Mammary epithelial cell (primary cell): ENCODE measurements at regions of chr11 and their contacts with region 1.

Region 1: DNA sequence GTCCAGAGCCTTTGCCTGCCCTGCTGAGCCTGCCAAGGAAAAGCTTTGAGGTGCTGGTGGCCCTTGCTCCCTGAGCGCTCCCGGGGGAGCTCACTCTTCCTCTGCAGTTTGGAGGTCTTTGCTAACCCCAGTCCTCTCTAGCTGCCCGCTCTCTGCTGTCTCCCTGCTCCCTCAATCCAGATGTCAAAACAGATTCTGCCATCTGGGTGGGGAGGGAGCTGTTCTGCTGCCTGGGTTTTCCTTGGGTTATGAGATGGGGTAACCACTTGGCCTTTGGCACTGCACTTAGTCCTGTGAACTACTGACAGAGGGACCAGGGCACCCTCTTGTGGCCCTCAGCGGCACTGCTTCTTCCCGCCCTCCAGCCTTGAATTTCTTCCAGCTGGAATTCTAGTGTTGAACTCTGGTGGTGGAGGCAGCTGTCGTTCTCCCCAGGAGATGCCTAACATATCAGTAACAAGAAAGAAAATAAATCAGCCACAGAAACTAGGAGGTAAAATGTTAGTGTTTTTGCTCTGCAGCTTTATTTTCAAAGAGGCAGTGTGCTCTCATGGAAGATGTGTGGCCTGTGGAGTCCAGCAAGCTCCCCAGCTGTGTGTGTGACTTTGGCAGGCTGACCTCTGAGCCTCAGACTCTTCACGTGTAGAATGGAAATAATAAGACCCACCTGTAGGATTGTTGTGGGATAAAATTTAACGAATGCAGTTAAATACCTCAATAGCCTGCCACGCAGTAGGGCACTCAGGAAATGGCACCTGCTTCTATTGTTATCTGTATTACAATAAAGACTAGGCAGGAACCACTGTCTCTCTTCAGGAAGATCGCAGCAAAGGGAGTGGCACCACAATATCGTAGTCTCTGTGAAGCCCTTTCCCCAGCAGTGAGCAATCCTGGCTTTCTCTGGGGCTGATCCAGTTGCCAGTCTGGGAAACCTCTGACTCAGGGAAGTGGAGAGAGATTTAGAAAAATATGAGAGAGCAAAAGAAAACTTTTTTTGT is 23.4 kb downstream of the ARFGAP2 start:
- DNase-seq: peak; percentile 55
- H3K4me3 ChIP-seq: no peak overlapping the region
- H3K27ac ChIP-seq: no peak overlapping the region
- H3K4me1 ChIP-seq: no peaks in the 10 kb centered on the region
- H3K27me3 ChIP-seq: no peaks in the 10 kb centered on the region
- CTCF ChIP-seq: peak; percentile 99 to 100

Region 2: GRCh38 chr11:46461461-46461927 is 691.8 kb before region 1 on chr11:
- CTCF ChIA-PET with region 1: no interaction called
- dilution Hi-C with region 1: no loop called
- in situ Hi-C with region 1: no loop called
- intact Hi-C with region 1: no loop called
- DNase-seq: no peak
- H3K4me3 ChIP-seq: no peak overlapping the region
- H3K27ac ChIP-seq: no peak overlapping the region
- H3K4me1 ChIP-seq: peaks cover 6% of the 10 kb centered on the region
- H3K27me3 ChIP-seq: no peaks in the 10 kb centered on the region
- CTCF ChIP-seq: no peak

Region 3: DNA sequence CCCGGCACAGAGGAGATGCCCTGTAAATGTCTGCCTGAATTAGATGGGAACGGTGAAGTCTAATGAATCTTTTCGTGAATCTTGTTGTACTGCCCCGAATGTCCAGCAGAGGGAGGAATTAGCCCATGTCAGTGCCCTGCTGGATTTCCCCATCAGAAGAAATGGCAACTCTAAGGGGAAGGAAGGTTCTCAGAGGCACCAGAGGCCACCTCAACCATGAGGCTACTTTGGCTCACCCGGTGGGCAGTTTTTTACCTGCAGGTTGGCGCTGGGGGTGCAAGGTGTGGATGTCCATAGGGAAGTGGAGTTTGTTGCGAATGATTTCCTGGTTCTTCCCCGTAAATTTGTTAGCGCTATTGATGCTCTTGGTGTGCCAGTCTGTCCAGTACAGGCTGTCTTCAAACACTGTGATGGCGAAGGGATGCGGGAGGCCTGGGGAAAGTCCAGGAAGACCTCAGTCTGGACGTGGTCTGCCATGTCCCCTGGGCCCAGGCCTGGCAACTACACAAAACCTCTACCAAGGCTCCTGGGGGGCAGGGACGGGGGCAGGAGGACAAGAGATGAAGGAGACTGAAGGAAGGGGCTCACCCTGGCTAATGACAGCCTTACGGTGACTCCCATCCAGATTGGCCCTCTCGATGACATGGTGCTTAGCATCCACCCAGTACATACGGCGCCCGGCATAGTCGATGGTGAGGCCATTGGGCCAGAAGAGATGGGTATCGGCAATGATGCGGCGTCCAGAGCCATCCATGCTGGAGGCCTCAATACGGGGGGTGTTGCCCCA is 263.4 kb before region 1 on chr11:
- CTCF ChIA-PET with region 1: no interaction called
- dilution Hi-C with region 1: no loop called
- in situ Hi-C with region 1: loop called in 1 of 2 experiments (anchors 5 kb)
- intact Hi-C with region 1: loop called (anchors 1 kb)
- DNase-seq: peak; percentile 55
- H3K4me3 ChIP-seq: no peak overlapping the region
- H3K27ac ChIP-seq: no peak overlapping the region
- H3K4me1 ChIP-seq: no peaks in the 10 kb centered on the region
- H3K27me3 ChIP-seq: no peaks in the 10 kb centered on the region
- CTCF ChIP-seq: peak; percentile 89

Region 4: GRCh38 chr11:46987183-46987582 is 166.1 kb before region 1 on chr11:
- CTCF ChIA-PET with region 1: no interaction called
- dilution Hi-C with region 1: no loop called
- in situ Hi-C with region 1: no loop called
- intact Hi-C with region 1: loop called (anchors 5 kb)
- DNase-seq: peak; percentile 79
- H3K4me3 ChIP-seq: no peak overlapping the region
- H3K27ac ChIP-seq: no peak overlapping the region
- H3K4me1 ChIP-seq: peaks cover 7% of the 10 kb centered on the region
- H3K27me3 ChIP-seq: no peaks in the 10 kb centered on the region
- CTCF ChIP-seq: peak; percentile 23 to 40

Region 5: GRCh38 chr11:47111318-47111804 is 41.9 kb before region 1 on chr11:
- CTCF ChIA-PET with region 1: no interaction called
- dilution Hi-C with region 1: loop called (anchors 5 kb)
- in situ Hi-C with region 1: no loop called
- intact Hi-C with region 1: no loop called
- DNase-seq: no peak
- H3K4me3 ChIP-seq: no peak overlapping the region
- H3K27ac ChIP-seq: no peak overlapping the region
- H3K4me1 ChIP-seq: no peaks in the 10 kb centered on the region
- H3K27me3 ChIP-seq: no peaks in the 10 kb centered on the region
- CTCF ChIP-seq: no peak

Region 6: GRCh38 chr11:47355283-47356128 is 202.3 kb after region 1 on chr11:
- CTCF ChIA-PET with region 1: no interaction called
- dilution Hi-C with region 1: no loop called
- in situ Hi-C with region 1: no loop called
- intact Hi-C with region 1: loop called (anchors 2 kb)
- DNase-seq: peak; percentile 78
- H3K4me3 ChIP-seq: peak overlapping the region in 1 of 3 experiments; percentile 34
- H3K27ac ChIP-seq: no peak overlapping the region
- H3K4me1 ChIP-seq: peaks cover 5% of the 10 kb centered on the region
- H3K27me3 ChIP-seq: no peaks in the 10 kb centered on the region
- CTCF ChIP-seq: peak; percentile 98 to 100